Ascending aorta (tissue), 2 donors: ENCODE measurements at regions of chr1 and their contacts with region 1.

Region 1: GRCh38 chr1:226634166-226634588 is 85.6 kb downstream of the STUM start:
- DNase-seq: peak; percentile 4 to 89
- H3K4me3 ChIP-seq: no peak overlapping the region
- H3K27ac ChIP-seq: peak overlapping the region; percentile 66 to 76
- H3K4me1 ChIP-seq: peaks cover 3 to 14% of the 10 kb centered on the region in 2 donors
- H3K27me3 ChIP-seq: no peaks in the 10 kb centered on the region
- CTCF ChIP-seq: peak; percentile 82 to 98 (median 94)

Region 2: GRCh38 chr1:226547754-226548191 is 86.4 kb before region 1 on chr1:
- intact Hi-C with region 1: loop called (anchors 10 kb)
- DNase-seq: peak; percentile 30 to 91
- H3K4me3 ChIP-seq: peak overlapping the region; percentile 65 to 68
- H3K27ac ChIP-seq: no peak overlapping the region
- H3K4me1 ChIP-seq: peaks cover 0 to 18% of the 10 kb centered on the region in 2 donors
- H3K27me3 ChIP-seq: no peaks in the 10 kb centered on the region
- CTCF ChIP-seq: peak; percentile 73 to 92 (median 90)

Region 3: GRCh38 chr1:226558036-226558650 is 76.0 kb before region 1 on chr1:
- intact Hi-C with region 1: no loop called
- DNase-seq: peak in 1 of 2 donors; percentile 12
- H3K4me3 ChIP-seq: no peak overlapping the region
- H3K27ac ChIP-seq: no peak overlapping the region
- H3K4me1 ChIP-seq: no peaks in the 10 kb centered on the region
- H3K27me3 ChIP-seq: no peaks in the 10 kb centered on the region
- CTCF ChIP-seq: no peak

Region 4: GRCh38 chr1:226679853-226680516 is 45.8 kb after region 1 on chr1:
- intact Hi-C with region 1: loop called (anchors 5 kb)
- DNase-seq: peak in 1 of 2 donors; percentile 95
- H3K4me3 ChIP-seq: peak overlapping the region; percentile 25 to 63
- H3K27ac ChIP-seq: peak overlapping the region; percentile 85 to 91
- H3K4me1 ChIP-seq: peaks cover 13 to 34% of the 10 kb centered on the region in 2 donors
- H3K27me3 ChIP-seq: no peaks in the 10 kb centered on the region
- CTCF ChIP-seq: no peak

Region 5: GRCh38 chr1:226702957-226703831 is 69.0 kb after region 1 on chr1:
- intact Hi-C with region 1: loop called (anchors 5 kb)
- DNase-seq: peak in 1 of 2 donors; percentile 84
- H3K4me3 ChIP-seq: peak overlapping the region; percentile 61 to 85
- H3K27ac ChIP-seq: peak overlapping the region; percentile 96 to 98
- H3K4me1 ChIP-seq: peaks cover 0 to 8% of the 10 kb centered on the region in 2 donors
- H3K27me3 ChIP-seq: no peaks in the 10 kb centered on the region
- CTCF ChIP-seq: no peak

Region 6: GRCh38 chr1:226827968-226828513 is 193.9 kb after region 1 on chr1:
- intact Hi-C with region 1: loop called (anchors 1 kb)
- DNase-seq: peak; percentile 71 to 98
- H3K4me3 ChIP-seq: peak overlapping the region in 1 of 2 donors; percentile 33
- H3K27ac ChIP-seq: peak overlapping the region; percentile 55 to 64
- H3K4me1 ChIP-seq: no peaks in the 10 kb centered on the region
- H3K27me3 ChIP-seq: no peaks in the 10 kb centered on the region
- CTCF ChIP-seq: peak; percentile 93 to 97 (median 93)

Region 7: DNA sequence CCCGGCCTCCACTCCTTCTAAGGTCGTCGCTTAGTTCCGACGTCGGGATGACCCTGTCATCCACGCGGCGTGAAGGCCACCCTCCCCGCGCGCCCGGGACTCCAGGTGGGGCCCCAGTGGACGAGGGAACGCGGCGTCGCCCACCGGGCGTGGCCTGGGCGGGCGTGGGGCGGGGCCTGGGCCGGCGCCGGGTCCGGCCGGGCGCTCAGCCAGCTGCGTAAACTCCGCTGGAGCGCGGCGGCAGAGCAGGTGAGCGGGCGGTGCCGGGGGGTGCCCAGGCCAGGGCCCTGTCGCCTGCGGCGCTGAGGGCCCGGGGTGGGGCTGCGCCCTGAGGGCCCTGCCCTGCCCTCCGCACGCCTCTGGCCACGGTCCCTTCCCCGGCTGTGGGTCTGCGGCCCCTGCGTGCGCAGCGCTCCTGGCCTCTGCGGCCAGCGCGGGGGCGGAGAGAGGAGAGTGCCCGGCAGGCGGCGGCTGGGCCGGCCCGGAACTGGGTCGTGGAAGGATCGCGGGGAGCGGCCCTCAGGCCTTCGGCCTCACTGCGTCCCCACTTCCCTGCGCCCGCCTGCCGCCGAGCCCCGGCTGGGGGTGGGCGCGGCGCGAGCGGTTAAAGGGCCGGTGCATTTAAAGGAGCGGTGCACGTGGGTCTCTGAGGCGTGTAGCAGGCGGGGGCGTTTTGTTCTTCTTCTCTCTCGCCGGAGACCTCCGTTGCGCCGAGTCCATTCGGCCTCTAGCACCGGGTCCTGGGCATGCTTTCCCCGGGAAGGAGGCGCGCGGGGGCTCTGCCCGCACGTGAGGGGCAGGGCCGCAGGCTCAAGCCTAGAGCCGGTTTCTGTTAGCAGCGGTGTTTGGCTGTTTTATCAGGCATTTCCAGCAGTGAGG is 236.5 kb after region 1 on chr1 and contains the start of gene PSEN2:
- intact Hi-C with region 1: loop called (anchors 5 kb)
- DNase-seq: peak; percentile 24 to 86
- H3K4me3 ChIP-seq: peak within 1 kb of the TSS; percentile 60 to 90
- H3K27ac ChIP-seq: peak within 1 kb of the TSS; percentile 61 to 79
- H3K4me1 ChIP-seq: peaks cover 0 to 9% of the 10 kb centered on the region in 2 donors
- H3K27me3 ChIP-seq: no peaks in the 10 kb centered on the region
- CTCF ChIP-seq: peak; percentile 5 to 35 (median 16)
- total RNA-seq, gene PSEN2: 26.5 TPM

Region 8: GRCh38 chr1:227225715-227226346 is 591.7 kb after region 1 on chr1:
- intact Hi-C with region 1: no loop called
- DNase-seq: no peak
- H3K4me3 ChIP-seq: no peak overlapping the region
- H3K27ac ChIP-seq: no peak overlapping the region
- H3K4me1 ChIP-seq: no peaks in the 10 kb centered on the region
- H3K27me3 ChIP-seq: no peaks in the 10 kb centered on the region
- CTCF ChIP-seq: no peak